ENCODE measurements at regions of chr1 and their contacts with region 1.

Region 1: GRCh38 chr1:201023517-201023902 is at the start of gene KIF21B:
- DNase-seq: peak; percentile 95
- ATAC-seq: peak; percentile 64
- H3K4me3 Mint-ChIP-seq: peak within 1 kb of the TSS; percentile 99
- H3K27ac Mint-ChIP-seq: peak within 1 kb of the TSS; percentile 99
- H3K4me1 Mint-ChIP-seq: peaks cover 77% of the 10 kb centered on the region
- H3K27me3 Mint-ChIP-seq: no peaks in the 10 kb centered on the region
- total RNA-seq, gene KIF21B: 62.8 to 67.1 TPM

Region 2: DNA sequence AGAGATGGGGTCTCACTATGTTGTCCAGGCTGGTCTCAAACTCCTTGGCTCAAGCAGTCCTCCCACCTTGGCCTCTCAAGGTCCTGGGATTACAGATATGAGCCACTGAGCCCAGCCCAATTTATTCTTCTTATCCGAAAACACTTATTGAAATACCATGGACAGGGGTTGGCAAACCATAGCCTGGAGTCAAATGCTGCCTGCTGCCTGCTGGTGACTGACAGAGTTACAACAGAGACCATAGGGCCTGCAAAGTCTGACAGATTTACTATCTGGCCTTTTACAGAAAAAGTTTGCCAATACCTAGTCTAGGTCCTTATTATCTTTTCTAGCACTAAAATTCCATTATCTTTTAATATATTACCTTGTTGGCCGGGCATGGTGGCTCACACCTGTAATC is 526.6 kb before region 1 on chr1:
- CTCF ChIA-PET with region 1: no interaction called
- POLR2A ChIA-PET with region 1: no interaction called
- intact Hi-C with region 1: no loop called
- DNase-seq: no peak
- ATAC-seq: no peak
- H3K4me3 Mint-ChIP-seq: no peak overlapping the region
- H3K27ac Mint-ChIP-seq: no peak overlapping the region
- H3K4me1 Mint-ChIP-seq: no peaks in the 10 kb centered on the region
- H3K27me3 Mint-ChIP-seq: no peaks in the 10 kb centered on the region

Region 3: GRCh38 chr1:200669314-200670241 is 353.9 kb before region 1 on chr1 and contains the start of gene DDX59:
- CTCF ChIA-PET with region 1: no interaction called
- POLR2A ChIA-PET with region 1: interaction called, 3 read pairs
- intact Hi-C with region 1: loop called in 1 of 2 experiments (anchors 1 kb)
- DNase-seq: peak; percentile 96
- ATAC-seq: peak; percentile 87
- H3K4me3 Mint-ChIP-seq: peak within 1 kb of the TSS; percentile 94
- H3K27ac Mint-ChIP-seq: peak within 1 kb of the TSS; percentile 99
- H3K4me1 Mint-ChIP-seq: peaks cover 40% of the 10 kb centered on the region
- H3K27me3 Mint-ChIP-seq: no peaks in the 10 kb centered on the region
- total RNA-seq, gene DDX59: 17.4 to 19.4 TPM

Region 4: GRCh38 chr1:200971955-200972711 is 51.4 kb before region 1 on chr1:
- CTCF ChIA-PET with region 1: interaction called, 13 read pairs
- POLR2A ChIA-PET with region 1: no interaction called
- intact Hi-C with region 1: no loop called
- DNase-seq: peak; percentile 78
- ATAC-seq: no peak
- H3K4me3 Mint-ChIP-seq: no peak overlapping the region
- H3K27ac Mint-ChIP-seq: no peak overlapping the region
- H3K4me1 Mint-ChIP-seq: no peaks in the 10 kb centered on the region
- H3K27me3 Mint-ChIP-seq: no peaks in the 10 kb centered on the region

Region 5: DNA sequence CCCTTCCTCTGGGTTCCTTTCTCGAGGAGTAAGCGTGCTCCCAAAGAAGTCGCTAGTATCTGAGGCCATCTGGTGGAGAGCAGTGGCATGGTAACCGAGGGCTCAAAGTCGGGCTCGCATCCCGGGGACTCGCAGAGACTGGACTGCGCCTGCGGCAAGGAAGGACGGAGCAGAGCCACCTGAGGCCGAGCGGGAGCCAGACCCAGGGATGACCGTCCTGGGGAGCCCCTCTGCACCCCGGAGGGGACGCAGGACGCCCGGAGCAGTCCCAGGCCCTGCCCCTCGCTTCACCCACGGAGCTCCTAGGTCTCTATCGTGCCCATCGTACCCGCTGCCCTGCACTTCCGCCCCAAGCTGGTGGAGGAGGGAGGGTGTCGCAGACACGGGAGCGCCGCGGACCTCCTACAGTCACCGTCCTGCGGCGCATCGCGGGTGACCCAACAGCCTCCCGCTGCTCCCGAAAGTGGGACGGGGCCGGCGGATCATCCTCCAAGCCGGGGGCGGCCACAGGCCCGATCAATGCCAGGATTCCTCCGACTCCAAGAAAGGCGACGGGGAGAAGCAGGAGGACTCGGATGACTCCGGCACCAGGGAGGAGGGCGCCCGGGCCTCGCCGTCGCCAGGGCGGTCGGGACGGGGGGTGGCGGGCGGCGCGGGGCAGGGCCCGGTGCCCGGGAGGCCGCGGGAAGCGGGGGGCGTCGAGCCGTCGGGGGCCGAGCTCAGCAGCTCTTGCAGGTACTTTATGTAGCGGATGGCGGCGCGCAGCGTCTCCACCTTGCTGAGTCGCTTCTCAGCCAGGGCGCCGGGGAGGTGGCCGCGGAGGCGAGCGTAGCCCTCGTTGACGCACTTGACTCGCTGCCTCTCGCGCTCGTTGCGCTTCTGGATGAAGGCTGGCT is 91.0 kb after region 1 on chr1:
- CTCF ChIA-PET with region 1: interaction called, 5 read pairs
- POLR2A ChIA-PET with region 1: no interaction called
- intact Hi-C with region 1: loop called in 1 of 2 experiments (anchors 1 kb)
- DNase-seq: peak; percentile 88
- ATAC-seq: peak; percentile 94
- H3K4me3 Mint-ChIP-seq: peak overlapping the region; percentile 78
- H3K27ac Mint-ChIP-seq: peak overlapping the region; percentile 83
- H3K4me1 Mint-ChIP-seq: peaks cover 2% of the 10 kb centered on the region
- H3K27me3 Mint-ChIP-seq: no peaks in the 10 kb centered on the region

Region 6: DNA sequence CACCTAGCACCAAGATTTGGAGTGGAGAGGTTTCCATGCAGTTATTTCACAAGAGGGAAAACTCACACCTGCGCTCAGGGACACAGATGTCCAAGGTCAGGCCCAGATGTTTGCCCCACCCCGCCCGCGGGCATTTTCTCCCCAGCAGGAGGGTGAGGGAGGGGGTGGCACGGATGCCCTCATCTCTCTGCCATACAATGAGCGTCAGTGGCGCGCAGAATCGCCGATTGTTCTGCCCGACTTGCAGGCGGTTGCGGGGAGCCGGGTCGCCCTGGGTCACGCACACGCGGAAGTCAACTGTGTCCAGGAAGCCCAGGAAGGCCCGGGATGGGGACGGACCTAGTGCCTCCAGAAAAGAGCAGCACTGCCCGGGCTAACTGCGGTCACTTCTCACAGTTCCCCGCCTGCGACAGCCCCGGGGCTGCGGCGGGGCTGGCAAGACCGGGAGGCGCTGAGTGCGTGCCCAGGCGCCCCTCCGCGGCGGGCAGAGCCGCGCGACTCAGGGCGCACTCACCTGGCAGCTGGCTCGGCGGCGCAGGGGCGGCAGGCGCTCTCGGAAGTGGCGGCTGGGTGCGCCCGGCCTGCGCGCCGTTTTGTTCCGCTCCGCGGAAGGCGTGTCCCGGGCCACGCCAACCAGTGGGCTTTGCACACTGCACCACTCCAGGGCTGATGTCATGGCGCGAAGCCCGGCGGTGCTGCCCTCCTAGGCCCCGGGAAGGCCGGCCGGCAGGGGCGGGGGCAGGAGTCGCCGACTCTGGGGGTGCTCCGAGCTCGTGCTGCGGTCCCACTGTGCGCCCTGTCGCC is 483.2 kb after region 1 on chr1 and contains the start of gene CSRP1:
- CTCF ChIA-PET with region 1: interaction called, 3 read pairs
- POLR2A ChIA-PET with region 1: no interaction called
- intact Hi-C with region 1: loop called in 1 of 2 experiments (anchors 5 kb)
- DNase-seq: peak; percentile 92
- ATAC-seq: peak; percentile 94
- H3K4me3 Mint-ChIP-seq: peak within 1 kb of the TSS; percentile 91
- H3K27ac Mint-ChIP-seq: peak within 1 kb of the TSS; percentile 89
- H3K4me1 Mint-ChIP-seq: peaks cover 31% of the 10 kb centered on the region
- H3K27me3 Mint-ChIP-seq: no peaks in the 10 kb centered on the region
- total RNA-seq, gene CSRP1: 49.2 to 50.7 TPM